Aorta (tissue), 5 donors: ENCODE measurements at regions of chr15 and their contacts with region 1.

Region 1: GRCh38 chr15:52735231-52736089 is 54.7 kb downstream of the ONECUT1 start:
- DNase-seq: no peak
- ATAC-seq: peak; percentile 85
- H3K4me3 ChIP-seq: no peak overlapping the region
- H3K27ac ChIP-seq: no peak overlapping the region
- H3K4me1 ChIP-seq: no peaks in the 10 kb centered on the region
- H3K27me3 ChIP-seq: no peaks in the 10 kb centered on the region

Region 2: DNA sequence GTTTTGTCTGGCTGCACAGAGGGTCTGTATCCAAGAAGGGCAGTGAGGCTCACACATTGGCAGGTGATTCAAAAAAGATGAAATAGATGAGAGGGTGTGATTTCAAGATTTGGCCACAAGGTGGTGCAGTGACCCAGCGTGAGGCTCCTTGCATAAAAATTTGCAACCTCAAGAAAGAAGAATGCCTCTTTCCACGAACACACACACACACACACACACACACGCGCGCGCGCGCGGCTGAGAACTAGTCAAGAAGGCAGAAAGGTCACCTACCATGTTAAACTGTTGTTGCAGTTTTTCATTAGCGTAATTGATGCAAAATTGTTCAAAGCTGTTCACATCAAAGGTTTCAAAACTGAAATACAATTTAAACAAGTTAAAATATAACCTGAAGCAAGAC is 479.1 kb before region 1 on chr15:
- intact Hi-C with region 1: loop called (anchors 2 kb)
- DNase-seq: peak; percentile 70 to 84
- ATAC-seq: peak; percentile 81
- H3K4me3 ChIP-seq: no peak overlapping the region
- H3K27ac ChIP-seq: no peak overlapping the region
- H3K4me1 ChIP-seq: peaks cover 0 to 2% of the 10 kb centered on the region in 2 donors
- H3K27me3 ChIP-seq: no peaks in the 10 kb centered on the region

Region 3: GRCh38 chr15:52331490-52332240 is 403.8 kb before region 1 on chr15:
- intact Hi-C with region 1: loop called in 1 of 2 experiments (anchors 5 kb)
- DNase-seq: no peak
- ATAC-seq: no peak
- H3K4me3 ChIP-seq: no peak overlapping the region
- H3K27ac ChIP-seq: no peak overlapping the region
- H3K4me1 ChIP-seq: no peaks in the 10 kb centered on the region
- H3K27me3 ChIP-seq: no peaks in the 10 kb centered on the region

Region 4: GRCh38 chr15:52379395-52380106 is 355.9 kb before region 1 on chr15:
- intact Hi-C with region 1: loop called in 1 of 2 experiments (anchors 10 kb)
- DNase-seq: no peak
- ATAC-seq: no peak
- H3K4me3 ChIP-seq: no peak overlapping the region
- H3K27ac ChIP-seq: no peak overlapping the region
- H3K4me1 ChIP-seq: no peaks in the 10 kb centered on the region
- H3K27me3 ChIP-seq: no peaks in the 10 kb centered on the region

Region 5: GRCh38 chr15:53307952-53308621 is 572.6 kb after region 1 on chr15:
- intact Hi-C with region 1: no loop called
- DNase-seq: no peak
- ATAC-seq: no peak
- H3K4me3 ChIP-seq: no peak overlapping the region
- H3K27ac ChIP-seq: no peak overlapping the region
- H3K4me1 ChIP-seq: no peaks in the 10 kb centered on the region
- H3K27me3 ChIP-seq: no peaks in the 10 kb centered on the region